IMR-90 (cell line): ENCODE measurements at regions of chr3 and their contacts with region 1.

Region 1: DNA sequence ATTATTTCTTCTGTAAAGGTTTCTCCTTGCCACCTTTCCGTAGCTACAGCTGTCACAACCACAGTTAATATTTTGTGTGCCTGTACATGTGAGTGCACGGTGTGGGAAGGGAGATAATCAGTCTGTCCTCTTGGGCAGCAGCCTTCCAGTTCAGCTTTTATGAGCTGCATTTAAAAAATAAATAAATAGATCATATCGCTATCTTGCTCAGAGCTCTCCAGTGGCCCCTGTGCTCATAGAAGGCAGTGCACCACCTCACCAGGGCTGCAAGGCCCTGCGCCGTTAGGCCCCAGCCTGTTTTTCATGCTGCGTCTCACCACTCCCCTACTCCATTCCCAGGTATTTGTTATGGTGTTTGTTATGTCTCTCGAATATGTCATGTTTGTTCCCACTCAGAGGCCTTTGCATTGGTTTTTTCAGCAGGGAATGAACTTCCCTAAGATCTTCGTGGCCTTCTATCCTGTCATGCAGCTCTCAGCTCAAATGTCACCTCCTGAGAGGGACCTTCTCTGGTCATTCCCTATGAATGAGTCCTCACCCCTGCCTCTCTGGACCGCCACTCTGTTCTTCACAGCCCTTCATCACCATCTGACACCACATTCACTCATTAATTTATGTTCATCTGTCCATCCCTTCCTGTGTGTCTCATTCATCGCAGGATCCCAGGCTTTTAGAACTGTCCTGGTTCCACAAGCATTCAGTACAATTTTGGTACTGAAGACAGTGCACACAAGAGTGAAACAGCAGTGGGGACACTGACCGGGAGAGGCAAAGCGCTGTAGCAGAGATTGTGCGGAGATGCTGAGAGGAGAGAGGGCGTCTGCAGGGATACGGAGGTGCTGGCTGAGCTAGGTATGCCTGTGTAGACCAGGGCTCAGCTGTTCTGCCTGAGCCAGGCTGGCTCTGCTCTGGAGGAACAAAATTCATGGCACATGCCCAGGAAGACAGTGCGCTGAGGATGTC is 132.1 kb downstream of the CHCHD6 start:
- DNase-seq: peak; percentile 51
- ATAC-seq: peak; percentile 91
- H3K4me3 ChIP-seq: no peak overlapping the region
- H3K27ac ChIP-seq: no peak overlapping the region
- H3K4me1 ChIP-seq: peaks cover 8% of the 10 kb centered on the region
- H3K27me3 ChIP-seq: no peaks in the 10 kb centered on the region
- CTCF ChIP-seq: peak; percentile 45
- POLR2A ChIP-seq: no peak
- RAD21 ChIP-seq: peak; percentile 50

Region 2: DNA sequence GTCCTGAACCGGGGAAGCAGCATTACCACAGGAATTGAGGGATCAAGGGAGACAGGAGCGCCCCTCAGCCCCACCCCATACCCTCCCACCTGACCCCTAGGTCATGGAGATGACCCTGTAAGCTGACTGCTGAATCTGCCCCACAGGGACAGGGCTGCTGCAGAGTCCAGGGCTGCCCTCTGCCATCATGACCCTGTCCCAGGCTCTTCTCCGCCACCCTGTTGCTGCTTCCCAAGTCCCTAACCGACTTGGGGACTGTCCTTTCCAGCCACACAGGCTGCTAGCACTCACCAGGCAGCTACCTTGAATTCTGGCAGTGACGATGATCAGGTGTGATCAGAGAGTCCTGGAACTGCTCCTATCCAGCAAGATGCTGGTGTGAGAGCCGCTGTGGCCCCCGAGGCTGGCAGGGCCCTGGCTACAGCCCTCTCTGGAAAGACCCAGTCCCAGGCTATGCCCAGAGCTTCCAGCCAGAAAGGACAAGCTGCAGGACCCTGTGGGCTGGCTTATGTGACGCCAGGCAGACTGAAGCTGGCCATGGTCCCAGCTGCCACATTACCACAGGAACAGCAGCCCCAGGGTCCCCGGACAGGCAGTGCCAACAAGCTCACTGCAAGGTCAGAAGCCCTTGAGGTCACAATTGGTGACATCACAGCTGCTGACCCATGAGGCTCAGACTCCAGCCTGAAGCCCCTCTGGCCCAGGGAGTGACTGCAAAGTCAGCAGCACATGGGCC is 277.7 kb before region 1 on chr3 and contains the start of gene C3orf22:
- CTCF ChIA-PET with region 1: no interaction called
- POLR2A ChIA-PET with region 1: no interaction called
- dilution Hi-C with region 1: no loop called
- in situ Hi-C with region 1: no loop called
- intact Hi-C with region 1: no loop called
- DNase-seq: no peak
- ATAC-seq: no peak
- H3K4me3 ChIP-seq: no peak within 1 kb of the TSS
- H3K27ac ChIP-seq: no peak within 1 kb of the TSS
- H3K4me1 ChIP-seq: no peaks in the 10 kb centered on the region
- H3K27me3 ChIP-seq: peaks cover 16% of the 10 kb centered on the region
- CTCF ChIP-seq: no peak
- POLR2A ChIP-seq: no peak
- RAD21 ChIP-seq: no peak
- total RNA-seq, gene C3orf22: not detected in 2 replicates

Region 3: GRCh38 chr3:126703512-126704462 is 132.4 kb before region 1 on chr3 and contains the start of gene CHCHD6:
- CTCF ChIA-PET with region 1: no interaction called
- POLR2A ChIA-PET with region 1: no interaction called
- dilution Hi-C with region 1: no loop called
- in situ Hi-C with region 1: no loop called
- intact Hi-C with region 1: loop called (anchors 1 kb)
- DNase-seq: peak; percentile 94
- ATAC-seq: peak; percentile 98
- H3K4me3 ChIP-seq: peak within 1 kb of the TSS; percentile 80
- H3K27ac ChIP-seq: peak within 1 kb of the TSS; percentile 11; the same call in 1 of the 2 replicates
- H3K4me1 ChIP-seq: peaks cover 2% of the 10 kb centered on the region; the same call in 1 of the 2 replicates
- H3K27me3 ChIP-seq: peaks cover 2% of the 10 kb centered on the region; the same call in 1 of the 2 replicates
- CTCF ChIP-seq: no peak
- POLR2A ChIP-seq: no peak
- RAD21 ChIP-seq: no peak
- total RNA-seq, gene CHCHD6: 18.8 and 20.6 TPM in 2 replicates

Region 4: GRCh38 chr3:126850370-126851085 is 14.3 kb after region 1 on chr3:
- CTCF ChIA-PET with region 1: interaction called, 11 read pairs
- POLR2A ChIA-PET with region 1: no interaction called
- dilution Hi-C with region 1: no loop called
- in situ Hi-C with region 1: no loop called
- intact Hi-C with region 1: no loop called
- DNase-seq: peak; percentile 78
- ATAC-seq: peak; percentile 97
- H3K4me3 ChIP-seq: no peak overlapping the region
- H3K27ac ChIP-seq: peak overlapping the region; percentile 79
- H3K4me1 ChIP-seq: peaks cover 15% of the 10 kb centered on the region
- H3K27me3 ChIP-seq: no peaks in the 10 kb centered on the region
- CTCF ChIP-seq: no peak
- POLR2A ChIP-seq: no peak
- RAD21 ChIP-seq: no peak

Region 5: DNA sequence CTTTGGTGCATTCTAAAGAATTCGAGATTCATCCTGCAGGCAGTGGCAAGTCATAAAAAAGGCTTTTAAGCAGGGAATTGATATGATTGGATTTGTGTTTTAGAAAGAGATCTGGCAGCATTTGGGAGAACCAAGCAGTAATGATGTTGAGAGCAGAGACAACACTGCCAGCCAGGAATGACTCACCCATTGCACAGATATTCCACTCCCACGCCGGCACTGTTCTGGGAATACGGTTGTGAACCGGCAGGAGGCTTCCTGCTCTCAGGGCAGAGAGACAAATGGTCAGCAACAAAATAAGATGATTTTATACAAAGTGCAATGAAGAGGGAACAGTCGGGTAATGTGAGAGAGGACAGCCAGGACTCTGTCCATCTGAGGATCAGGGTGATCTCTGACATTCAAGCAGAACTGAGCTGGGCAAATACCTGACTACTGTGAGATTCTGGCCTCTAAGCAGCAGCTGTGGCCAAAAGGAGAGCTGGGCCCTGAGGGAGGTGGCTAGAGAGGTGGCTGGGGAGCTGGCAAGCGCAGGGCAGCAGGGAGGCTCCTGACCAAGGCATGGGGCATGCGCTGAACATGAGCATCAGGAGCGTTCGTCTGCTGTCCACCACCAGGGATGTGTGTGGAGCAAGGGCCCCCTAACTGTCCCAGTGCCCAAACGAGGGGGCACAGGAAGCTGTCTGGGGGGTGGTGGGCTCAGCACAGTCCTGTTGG is 90.7 kb after region 1 on chr3:
- CTCF ChIA-PET with region 1: no interaction called
- POLR2A ChIA-PET with region 1: no interaction called
- dilution Hi-C with region 1: no loop called
- in situ Hi-C with region 1: no loop called
- intact Hi-C with region 1: loop called (anchors 5 kb)
- DNase-seq: peak; percentile 89
- ATAC-seq: peak; percentile 90
- H3K4me3 ChIP-seq: no peak overlapping the region
- H3K27ac ChIP-seq: peak overlapping the region; percentile 25
- H3K4me1 ChIP-seq: peaks cover 26% of the 10 kb centered on the region
- H3K27me3 ChIP-seq: no peaks in the 10 kb centered on the region
- CTCF ChIP-seq: peak; percentile 54
- POLR2A ChIP-seq: no peak
- RAD21 ChIP-seq: peak; percentile 59

Region 6: GRCh38 chr3:127351321-127351720 is 515.1 kb after region 1 on chr3:
- CTCF ChIA-PET with region 1: no interaction called
- POLR2A ChIA-PET with region 1: no interaction called
- dilution Hi-C with region 1: no loop called
- in situ Hi-C with region 1: no loop called
- intact Hi-C with region 1: no loop called
- DNase-seq: no peak
- ATAC-seq: no peak
- H3K4me3 ChIP-seq: no peak overlapping the region
- H3K27ac ChIP-seq: no peak overlapping the region
- H3K4me1 ChIP-seq: no peaks in the 10 kb centered on the region
- H3K27me3 ChIP-seq: peaks cover 5% of the 10 kb centered on the region; the same call in 1 of the 2 replicates
- CTCF ChIP-seq: no peak
- POLR2A ChIP-seq: no peak
- RAD21 ChIP-seq: no peak

Region 7: DNA sequence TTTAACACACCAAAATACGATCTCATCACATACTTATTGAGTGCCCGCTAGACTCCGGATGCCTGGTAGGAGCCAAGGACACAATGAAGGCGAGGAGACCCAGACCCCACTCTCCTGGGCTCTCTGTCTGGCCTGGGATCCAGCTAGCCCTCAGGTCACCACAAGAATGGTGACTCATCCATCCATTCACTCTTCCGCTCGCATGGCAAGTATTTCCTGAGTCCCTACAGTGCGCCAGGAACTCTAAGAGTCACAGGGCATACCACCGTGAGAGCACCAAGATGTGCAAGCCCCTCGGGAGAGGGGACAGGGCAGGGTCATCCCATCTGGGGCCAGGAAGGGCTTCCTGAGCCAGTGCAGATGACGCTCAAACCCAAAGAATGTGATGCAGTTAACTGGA is 553.2 kb after region 1 on chr3:
- CTCF ChIA-PET with region 1: no interaction called
- POLR2A ChIA-PET with region 1: no interaction called
- dilution Hi-C with region 1: no loop called
- in situ Hi-C with region 1: no loop called
- intact Hi-C with region 1: no loop called
- DNase-seq: no peak
- ATAC-seq: no peak
- H3K4me3 ChIP-seq: no peak overlapping the region
- H3K27ac ChIP-seq: no peak overlapping the region
- H3K4me1 ChIP-seq: no peaks in the 10 kb centered on the region
- H3K27me3 ChIP-seq: peaks cover 9% of the 10 kb centered on the region
- CTCF ChIP-seq: no peak
- POLR2A ChIP-seq: no peak
- RAD21 ChIP-seq: no peak

Region 8: GRCh38 chr3:127473244-127474024 is 637.3 kb after region 1 on chr3:
- CTCF ChIA-PET with region 1: no interaction called
- POLR2A ChIA-PET with region 1: no interaction called
- dilution Hi-C with region 1: no loop called
- in situ Hi-C with region 1: no loop called
- intact Hi-C with region 1: no loop called
- DNase-seq: no peak
- ATAC-seq: no peak
- H3K4me3 ChIP-seq: no peak overlapping the region
- H3K27ac ChIP-seq: no peak overlapping the region
- H3K4me1 ChIP-seq: no peaks in the 10 kb centered on the region
- H3K27me3 ChIP-seq: peaks cover 29% of the 10 kb centered on the region
- CTCF ChIP-seq: no peak
- POLR2A ChIP-seq: no peak
- RAD21 ChIP-seq: no peak